ENCODE measurements at regions of chr1 and their contacts with region 1.

Region 1: GRCh38 chr1:110106013-110106941 is 6.0 kb upstream of the UBL4B start:
- DNase-seq: peak; percentile 74 to 85
- ATAC-seq: peak; percentile 76
- H3K4me3 ChIP-seq: no peak overlapping the region
- H3K27ac ChIP-seq: no peak overlapping the region
- H3K4me1 ChIP-seq: no peaks in the 10 kb centered on the region
- H3K27me3 ChIP-seq: no peaks in the 10 kb centered on the region

Region 2: GRCh38 chr1:110053557-110054428 is 52.5 kb before region 1 on chr1:
- intact Hi-C with region 1: loop called (anchors 2 kb)
- DNase-seq: peak; percentile 70 to 91
- ATAC-seq: peak; percentile 80
- H3K4me3 ChIP-seq: no peak overlapping the region
- H3K27ac ChIP-seq: no peak overlapping the region
- H3K4me1 ChIP-seq: no peaks in the 10 kb centered on the region
- H3K27me3 ChIP-seq: no peaks in the 10 kb centered on the region

Region 3: GRCh38 chr1:110176299-110176956 is 70.2 kb after region 1 on chr1:
- intact Hi-C with region 1: no loop called
- DNase-seq: no peak
- ATAC-seq: peak; percentile 26
- H3K4me3 ChIP-seq: no peak overlapping the region
- H3K27ac ChIP-seq: no peak overlapping the region
- H3K4me1 ChIP-seq: no peaks in the 10 kb centered on the region
- H3K27me3 ChIP-seq: no peaks in the 10 kb centered on the region

Measured in aorta (tissue), 5 donors.